ENCODE measurements at regions of chr7 and their contacts with region 1.

Region 1: DNA sequence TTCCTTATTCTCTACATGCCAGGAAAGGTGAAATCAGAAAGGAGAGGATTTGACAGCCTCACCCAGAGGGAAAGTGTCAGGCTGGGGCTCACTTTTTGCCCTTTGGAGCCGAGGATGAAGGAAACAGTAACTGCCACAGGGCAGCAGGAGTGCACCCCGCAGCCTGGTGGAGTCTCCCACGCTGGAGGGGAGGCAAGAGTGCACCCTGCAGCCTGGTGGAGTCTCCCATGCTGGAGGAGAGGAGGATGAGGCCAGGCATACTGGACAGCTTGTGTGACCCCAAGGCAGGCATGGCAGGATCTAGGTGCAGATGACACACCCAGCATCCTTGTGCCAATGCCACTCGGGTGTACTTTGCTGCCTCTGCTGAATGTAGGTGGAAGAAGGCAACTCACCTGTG is 484.0 kb downstream of the DNAJB6 start:
- DNase-seq: no peak
- H3K4me3 ChIP-seq: no peak overlapping the region
- CTCF ChIP-seq: no peak

Region 2: DNA sequence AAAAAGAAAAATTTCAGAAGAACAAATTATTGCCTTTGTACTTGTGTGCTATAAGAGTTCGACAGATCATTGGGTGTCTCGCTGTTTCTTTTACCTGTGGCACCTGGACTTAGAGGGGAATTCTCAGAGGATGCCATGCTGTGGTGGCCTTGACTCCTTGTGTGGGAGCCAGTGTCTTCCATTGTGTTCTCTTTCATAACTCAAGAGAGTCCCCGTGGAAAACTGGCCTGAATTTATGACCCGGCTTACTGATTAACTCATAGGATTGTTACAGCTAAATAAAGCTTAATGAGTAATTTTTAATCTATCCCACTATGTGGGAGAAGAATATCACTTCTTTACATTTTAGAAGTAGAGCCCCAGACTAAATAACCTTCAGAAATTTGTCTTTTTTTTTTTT is 627.5 kb before region 1 on chr7:
- in situ Hi-C with region 1: no loop called
- DNase-seq: no peak
- H3K4me3 ChIP-seq: no peak overlapping the region
- CTCF ChIP-seq: no peak

Region 3: GRCh38 chr7:157874870-157875229 is 54.1 kb after region 1 on chr7:
- in situ Hi-C with region 1: loop called (anchors 5 kb)
- DNase-seq: no peak
- H3K4me3 ChIP-seq: no peak overlapping the region
- CTCF ChIP-seq: no peak

Measured in astrocyte of the cerebellum (primary cell).